ENCODE measurements at regions of chr5 and their contacts with region 1.

Region 1: DNA sequence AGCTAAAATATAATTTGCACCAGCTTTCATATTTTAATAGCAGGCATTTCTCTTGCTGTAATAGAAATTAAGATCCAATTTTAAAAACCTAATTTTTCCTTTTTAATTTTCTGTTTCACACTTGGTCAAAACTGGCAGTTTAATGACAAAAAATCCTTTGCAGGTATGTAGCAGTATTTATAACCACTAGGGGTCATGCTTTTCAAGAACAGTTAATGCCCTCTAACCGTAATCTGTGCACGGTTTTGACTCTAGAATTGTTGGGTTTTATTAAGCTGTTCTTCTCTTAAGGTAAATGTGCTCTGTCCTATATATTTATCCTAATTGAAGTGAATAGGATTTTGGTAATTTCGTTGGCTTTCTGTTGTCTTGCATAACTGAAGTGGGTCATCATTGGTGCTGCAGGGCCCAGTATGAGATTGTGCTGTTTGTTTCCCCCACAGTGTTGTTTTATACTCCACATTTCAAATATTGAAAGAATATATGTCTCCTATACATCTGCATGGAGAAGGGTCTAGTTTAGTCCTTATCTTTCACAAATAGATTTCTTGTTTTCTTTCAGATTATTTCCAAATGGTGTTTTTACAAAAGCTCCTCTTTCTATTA is 107.4 kb downstream of the SCAMP1 start:
- DNase-seq: peak; percentile 50
- H3K4me3 Mint-ChIP-seq: no peak overlapping the region
- H3K27ac Mint-ChIP-seq: no peak overlapping the region
- H3K4me1 Mint-ChIP-seq: peaks cover 5% of the 10 kb centered on the region
- H3K27me3 Mint-ChIP-seq: no peaks in the 10 kb centered on the region
- CTCF ChIP-seq: peak; percentile 70

Region 2: GRCh38 chr5:78899922-78900362 is 432.1 kb after region 1 on chr5:
- CTCF ChIA-PET with region 1: no interaction called
- POLR2A ChIA-PET with region 1: no interaction called
- intact Hi-C with region 1: loop called (anchors 5 kb)
- DNase-seq: peak; percentile 71
- H3K4me3 Mint-ChIP-seq: no peak overlapping the region
- H3K27ac Mint-ChIP-seq: no peak overlapping the region
- H3K4me1 Mint-ChIP-seq: no peaks in the 10 kb centered on the region
- H3K27me3 Mint-ChIP-seq: no peaks in the 10 kb centered on the region
- CTCF ChIP-seq: peak; percentile 68

Measured in MCF 10A (cell line).